Activated CD4-positive, alpha-beta memory T cell treated with anti-CD3 and anti-CD28 coated beads, Interleukin-2, amount 10 ng/mL, durations not matched to agents 7 days and 5 days (primary cell): ENCODE measurements at regions of chr18 and their contacts with region 1.

Region 1: GRCh38 chr18:63518178-63519012 is 23.8 kb upstream of the SERPINB12 start:
- DNase-seq: peak; percentile 63
- H3K4me3 Mint-ChIP-seq: no peak overlapping the region
- H3K27ac Mint-ChIP-seq: no peak overlapping the region
- H3K4me1 Mint-ChIP-seq: no peaks in the 10 kb centered on the region
- H3K27me3 Mint-ChIP-seq: peaks cover 36% of the 10 kb centered on the region

Region 2: DNA sequence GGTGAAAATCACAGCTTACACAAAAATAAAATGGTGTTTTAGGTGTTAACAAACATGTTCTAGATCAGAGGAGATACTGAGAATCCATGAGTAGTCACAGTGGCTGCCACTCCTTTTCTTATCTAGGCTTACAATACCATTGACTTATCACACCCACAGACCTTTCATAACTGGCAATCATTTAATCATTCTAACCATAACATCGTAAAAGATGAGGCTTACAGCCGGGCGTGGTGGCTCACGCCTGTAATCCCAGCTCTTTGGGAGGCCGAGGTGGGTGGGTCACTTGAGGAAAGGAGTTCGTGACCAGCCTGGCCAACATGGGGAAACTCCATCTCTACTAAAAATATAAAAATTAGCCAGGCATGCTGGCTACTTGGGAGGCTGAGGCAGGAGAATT is 60.4 kb before region 1 on chr18:
- CTCF ChIA-PET with region 1: no interaction called
- POLR2A ChIA-PET with region 1: no interaction called
- DNase-seq: no peak
- H3K4me3 Mint-ChIP-seq: no peak overlapping the region
- H3K27ac Mint-ChIP-seq: no peak overlapping the region
- H3K4me1 Mint-ChIP-seq: no peaks in the 10 kb centered on the region
- H3K27me3 Mint-ChIP-seq: peaks cover 23% of the 10 kb centered on the region

Region 3: DNA sequence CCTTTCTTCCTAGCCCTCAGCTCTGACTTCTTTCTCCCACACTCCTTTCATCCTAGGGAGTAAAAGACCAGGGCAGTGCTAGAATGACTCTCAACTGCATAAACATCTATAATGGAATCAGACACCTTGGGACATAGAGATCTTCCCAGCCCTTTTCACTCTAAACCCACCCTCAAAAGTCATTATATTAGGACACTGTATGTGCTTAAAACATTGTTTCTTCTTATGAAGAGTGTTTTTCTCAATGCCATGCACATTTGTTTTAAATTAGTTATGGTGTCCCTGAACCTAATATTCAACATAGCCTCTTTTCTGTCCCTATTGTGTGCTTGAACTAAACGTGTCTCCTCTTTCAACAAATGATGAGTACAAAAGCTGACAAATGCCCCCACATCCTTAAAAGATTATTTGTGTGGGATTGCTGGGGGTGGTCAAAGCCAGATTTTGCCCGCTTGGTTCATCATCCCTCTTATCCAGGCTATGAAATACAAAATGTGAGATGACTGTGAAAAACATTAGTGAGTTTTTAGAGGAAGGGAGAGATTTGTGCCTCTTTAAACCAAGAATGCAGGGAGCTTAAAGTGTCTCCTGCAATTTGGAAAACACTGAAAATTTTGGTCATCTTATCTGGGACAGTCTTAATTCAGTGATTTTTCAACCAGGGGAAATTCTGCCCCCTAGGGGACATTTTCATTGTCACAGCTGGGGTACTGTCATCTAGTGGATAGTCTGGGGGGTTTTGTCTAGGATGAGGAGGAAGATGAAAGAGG is 12.6 kb before region 1 on chr18:
- CTCF ChIA-PET with region 1: interaction called, 39 read pairs
- POLR2A ChIA-PET with region 1: no interaction called
- DNase-seq: no peak
- H3K4me3 Mint-ChIP-seq: no peak overlapping the region
- H3K27ac Mint-ChIP-seq: no peak overlapping the region
- H3K4me1 Mint-ChIP-seq: no peaks in the 10 kb centered on the region
- H3K27me3 Mint-ChIP-seq: peaks cover 17% of the 10 kb centered on the region

Region 4: DNA sequence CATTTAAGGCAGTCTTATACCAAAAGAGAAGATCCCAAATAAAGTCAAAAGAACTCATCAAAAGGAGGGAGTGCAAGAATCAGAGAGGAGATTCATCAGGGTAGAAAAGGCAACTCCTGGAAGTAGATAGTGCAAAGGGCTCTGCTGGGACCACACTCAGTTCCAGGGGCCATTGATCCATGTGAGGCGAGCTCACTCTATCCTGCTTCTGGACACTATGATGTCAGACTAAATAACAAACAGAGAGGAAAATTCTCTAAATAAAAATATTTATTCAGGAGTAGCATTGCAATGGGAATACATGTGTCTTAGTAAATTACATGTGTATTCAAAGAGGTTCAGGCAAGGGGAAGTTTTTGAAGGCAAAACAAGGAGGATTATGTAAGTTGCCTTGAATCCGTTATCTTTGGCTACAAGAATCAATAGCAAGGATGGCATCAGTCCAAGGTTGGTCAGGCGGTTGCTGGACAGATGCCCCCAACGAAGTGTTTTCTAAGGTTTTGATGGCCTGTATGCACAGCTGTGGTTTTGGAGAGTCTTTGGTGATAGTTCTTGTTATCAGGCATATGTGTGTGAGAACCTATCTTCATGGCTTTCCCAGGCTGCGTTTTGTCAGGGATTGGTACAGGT is 10.6 kb after region 1 on chr18:
- CTCF ChIA-PET with region 1: interaction called, 19 read pairs
- POLR2A ChIA-PET with region 1: no interaction called
- DNase-seq: no peak
- H3K4me3 Mint-ChIP-seq: no peak overlapping the region
- H3K27ac Mint-ChIP-seq: no peak overlapping the region
- H3K4me1 Mint-ChIP-seq: peaks cover 6% of the 10 kb centered on the region
- H3K27me3 Mint-ChIP-seq: peaks cover 31% of the 10 kb centered on the region

Region 5: GRCh38 chr18:63545000-63545399 is 26.6 kb after region 1 on chr18:
- CTCF ChIA-PET with region 1: interaction called, 14 read pairs
- POLR2A ChIA-PET with region 1: no interaction called
- DNase-seq: no peak
- H3K4me3 Mint-ChIP-seq: no peak overlapping the region
- H3K27ac Mint-ChIP-seq: no peak overlapping the region
- H3K4me1 Mint-ChIP-seq: no peaks in the 10 kb centered on the region
- H3K27me3 Mint-ChIP-seq: peaks cover 41% of the 10 kb centered on the region

Region 6: GRCh38 chr18:63578357-63578958 is 60.1 kb after region 1 on chr18:
- CTCF ChIA-PET with region 1: interaction called, 104 read pairs
- POLR2A ChIA-PET with region 1: interaction called, 7 read pairs
- DNase-seq: peak; percentile 22
- H3K4me3 Mint-ChIP-seq: no peak overlapping the region
- H3K27ac Mint-ChIP-seq: no peak overlapping the region
- H3K4me1 Mint-ChIP-seq: no peaks in the 10 kb centered on the region
- H3K27me3 Mint-ChIP-seq: peaks cover 18% of the 10 kb centered on the region

Region 7: GRCh38 chr18:63844254-63844653 is 325.9 kb after region 1 on chr18:
- CTCF ChIA-PET with region 1: interaction called, 14 read pairs
- POLR2A ChIA-PET with region 1: no interaction called
- DNase-seq: no peak
- H3K4me3 Mint-ChIP-seq: no peak overlapping the region
- H3K27ac Mint-ChIP-seq: no peak overlapping the region
- H3K4me1 Mint-ChIP-seq: no peaks in the 10 kb centered on the region
- H3K27me3 Mint-ChIP-seq: peaks cover 32% of the 10 kb centered on the region

Region 8: GRCh38 chr18:63936156-63936931 is 417.9 kb after region 1 on chr18:
- CTCF ChIA-PET with region 1: interaction called, 13 read pairs
- POLR2A ChIA-PET with region 1: no interaction called
- DNase-seq: peak; percentile 76
- H3K4me3 Mint-ChIP-seq: peak overlapping the region; percentile 71
- H3K27ac Mint-ChIP-seq: no peak overlapping the region
- H3K4me1 Mint-ChIP-seq: peaks cover 3% of the 10 kb centered on the region
- H3K27me3 Mint-ChIP-seq: peaks cover 17% of the 10 kb centered on the region